CD8-positive, alpha-beta T cell (primary cell): ENCODE measurements at regions of chr1 and their contacts with region 1.

Region 1: DNA sequence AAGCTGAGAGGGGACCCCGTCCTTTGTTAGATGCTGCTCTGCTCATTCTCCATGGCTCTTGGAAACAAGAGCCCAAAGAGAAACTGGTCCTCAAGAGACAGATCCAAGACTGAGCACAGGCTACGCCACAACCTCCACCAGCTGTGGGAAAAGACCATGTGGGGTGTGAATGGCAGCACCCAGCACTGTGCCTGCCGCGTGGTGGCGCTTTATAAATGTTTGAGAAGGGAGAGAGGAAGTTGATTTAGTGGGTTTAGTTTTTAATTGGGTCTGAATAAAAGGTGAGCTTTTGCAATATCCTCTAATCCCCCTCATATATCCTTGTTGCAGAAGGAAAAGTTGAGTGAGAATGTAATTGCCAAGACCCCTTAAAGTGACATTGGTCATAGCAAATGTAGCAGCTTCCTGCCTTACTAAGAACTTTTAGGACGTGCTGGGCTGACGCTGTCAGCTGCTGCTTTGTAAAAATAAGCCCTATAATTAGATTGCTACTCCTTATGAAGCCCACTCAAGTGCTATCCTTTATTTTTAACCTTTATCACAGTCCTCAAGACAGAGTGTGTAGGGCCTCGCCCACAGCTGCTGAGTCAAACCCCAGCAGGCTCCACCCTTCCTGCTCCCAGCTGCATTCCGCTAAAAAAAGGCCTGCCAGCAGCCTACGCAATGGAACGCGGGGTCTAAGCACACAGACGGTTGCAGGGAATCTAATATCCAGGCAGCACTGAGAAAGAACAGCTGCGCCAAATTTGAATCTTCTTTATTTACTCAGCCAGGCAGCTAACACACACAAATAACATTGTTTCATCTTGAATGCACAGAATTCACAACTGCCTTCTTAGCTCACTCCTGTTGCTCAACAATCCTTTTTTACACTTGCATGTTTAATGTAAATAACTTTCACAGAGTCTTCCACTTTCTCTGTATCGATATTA is 47.4 kb upstream of the PRDX6 start:
- DNase-seq: peak; percentile 46 to 81 (median 69)
- ATAC-seq: peak; percentile 81
- H3K4me3 ChIP-seq: no peak overlapping the region
- H3K4me3 Mint-ChIP-seq: peak overlapping the region; percentile 53
- H3K27ac ChIP-seq: no peak overlapping the region
- H3K27ac Mint-ChIP-seq: peak overlapping the region; percentile 71
- H3K4me1 ChIP-seq: peaks cover 24% of the 10 kb centered on the region
- H3K4me1 Mint-ChIP-seq: peaks cover 26% of the 10 kb centered on the region
- H3K27me3 ChIP-seq: no peaks in the 10 kb centered on the region
- H3K27me3 Mint-ChIP-seq: no peaks in the 10 kb centered on the region
- CTCF ChIP-seq: peak; percentile 67

Region 2: DNA sequence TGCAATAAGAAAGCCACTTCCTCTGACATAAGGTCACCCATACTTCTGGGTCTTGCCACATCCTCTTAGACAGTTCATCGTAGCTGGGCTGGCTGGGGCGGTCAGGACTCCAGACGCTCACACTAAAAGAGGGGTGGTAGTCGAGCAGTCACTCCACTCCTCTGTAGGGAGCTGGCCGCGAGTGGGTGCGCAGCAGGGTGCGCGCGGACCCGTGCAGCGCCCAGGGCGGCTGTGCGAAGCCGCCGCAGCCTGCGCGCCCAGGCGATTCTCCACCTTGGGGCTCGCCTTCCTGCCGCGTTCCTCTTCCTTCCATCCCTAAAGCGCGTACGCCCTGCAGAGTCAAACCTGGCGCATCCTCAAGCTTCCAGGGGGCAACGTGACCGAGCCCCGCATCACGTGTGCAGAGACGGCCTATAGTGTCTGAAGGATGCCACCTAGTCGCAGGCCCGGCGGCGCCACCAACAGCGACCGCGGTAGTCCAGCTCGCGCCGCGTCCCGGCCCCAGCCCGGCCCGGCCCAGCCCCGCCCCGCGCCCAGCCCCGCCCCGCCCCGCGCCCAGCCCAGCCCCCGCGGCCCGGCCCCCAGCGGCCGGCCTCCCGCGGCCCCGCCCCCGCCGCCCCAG is 47.0 kb after region 1 on chr1:
- CTCF ChIA-PET with region 1: interaction called, 47 read pairs
- POLR2A ChIA-PET with region 1: interaction called, 19 read pairs
- intact Hi-C with region 1: loop called (anchors 1 kb)
- DNase-seq: peak; percentile 51 to 91 (median 73)
- ATAC-seq: peak; percentile 76
- H3K4me3 ChIP-seq: peak overlapping the region; percentile 71 to 83
- H3K4me3 Mint-ChIP-seq: peak overlapping the region; percentile 93
- H3K27ac ChIP-seq: peak overlapping the region; percentile 70 to 91
- H3K27ac Mint-ChIP-seq: peak overlapping the region; percentile 95
- H3K4me1 ChIP-seq: peaks cover 54% of the 10 kb centered on the region
- H3K4me1 Mint-ChIP-seq: peaks cover 75% of the 10 kb centered on the region
- H3K27me3 ChIP-seq: no peaks in the 10 kb centered on the region
- H3K27me3 Mint-ChIP-seq: no peaks in the 10 kb centered on the region
- CTCF ChIP-seq: no peak

Region 3: GRCh38 chr1:173714759-173715537 is 285.2 kb after region 1 on chr1 and contains the start of gene KLHL20:
- CTCF ChIA-PET with region 1: interaction called, 18 read pairs
- POLR2A ChIA-PET with region 1: interaction called, 5 read pairs
- intact Hi-C with region 1: loop called (anchors 1 kb)
- DNase-seq: peak; percentile 72 to 94 (median 83)
- ATAC-seq: peak; percentile 98
- H3K4me3 ChIP-seq: peak within 1 kb of the TSS; percentile 80 to 86
- H3K4me3 Mint-ChIP-seq: peak within 1 kb of the TSS; percentile 96
- H3K27ac ChIP-seq: peak within 1 kb of the TSS; percentile 76 to 87
- H3K27ac Mint-ChIP-seq: peak within 1 kb of the TSS; percentile 97
- H3K4me1 ChIP-seq: peaks cover 24% of the 10 kb centered on the region
- H3K4me1 Mint-ChIP-seq: peaks cover 38% of the 10 kb centered on the region
- H3K27me3 ChIP-seq: peaks cover 0 to 2% of the 10 kb centered on the region in 2 experiments
- H3K27me3 Mint-ChIP-seq: peaks cover 7% of the 10 kb centered on the region
- CTCF ChIP-seq: no peak
- total RNA-seq, gene KLHL20: 27.9 to 29.0 TPM

Region 4: DNA sequence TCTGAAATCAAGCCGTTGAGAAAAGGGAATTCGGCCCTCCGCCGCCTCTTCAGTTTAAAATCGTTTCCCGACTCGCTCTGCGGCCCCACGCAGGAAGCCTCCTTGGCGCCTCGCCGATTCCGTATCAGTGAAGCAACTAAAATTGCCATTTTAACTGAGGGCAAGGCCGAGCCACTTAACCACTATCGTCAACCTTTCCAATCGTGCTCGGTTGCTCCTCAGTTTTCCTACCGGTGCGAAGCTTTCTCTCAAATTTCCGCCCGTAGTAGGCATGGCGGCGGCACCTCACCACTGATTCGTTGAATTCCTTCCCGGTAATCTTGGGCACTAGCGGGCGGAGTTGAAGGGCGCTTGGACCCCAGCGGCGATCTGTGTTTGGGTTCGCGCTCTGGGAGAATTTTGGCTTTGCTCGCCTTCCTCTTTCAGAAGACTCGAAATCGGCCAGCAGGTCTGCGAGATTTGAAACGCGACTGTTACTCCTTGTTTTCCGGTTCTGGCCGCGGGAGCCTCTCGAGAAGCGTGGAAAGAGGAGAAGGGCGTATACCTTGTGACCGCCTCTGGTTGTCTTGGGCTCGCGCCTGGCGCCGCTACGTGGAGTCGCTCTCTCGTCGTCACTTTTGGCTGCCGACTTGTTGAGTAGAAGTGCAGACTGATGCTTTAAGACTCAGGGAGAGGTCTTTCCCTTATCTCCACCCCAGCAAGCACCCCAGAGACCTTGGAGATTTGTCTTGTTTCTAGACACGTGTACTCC is 394.8 kb after region 1 on chr1 and contains the starts of genes CENPL and DARS2:
- CTCF ChIA-PET with region 1: interaction called, 39 read pairs
- POLR2A ChIA-PET with region 1: interaction called, 8 read pairs
- intact Hi-C with region 1: loop called (anchors 1 kb)
- DNase-seq: peak; percentile 79 to 97 (median 90)
- ATAC-seq: peak; percentile 86
- H3K4me3 ChIP-seq: peak within 1 kb of the TSS; percentile 92 to 97
- H3K4me3 Mint-ChIP-seq: peak within 1 kb of the TSS; percentile 93
- H3K27ac ChIP-seq: peak within 1 kb of the TSS; percentile 78 to 87
- H3K27ac Mint-ChIP-seq: peak within 1 kb of the TSS; percentile 90
- H3K4me1 ChIP-seq: peaks cover 11% of the 10 kb centered on the region
- H3K4me1 Mint-ChIP-seq: peaks cover 54% of the 10 kb centered on the region
- H3K27me3 ChIP-seq: no peaks in the 10 kb centered on the region
- H3K27me3 Mint-ChIP-seq: no peaks in the 10 kb centered on the region
- CTCF ChIP-seq: no peak
- total RNA-seq, gene CENPL: 4.0 to 5.7 TPM
- total RNA-seq, gene DARS2: 1.5 to 1.6 TPM

Region 5: DNA sequence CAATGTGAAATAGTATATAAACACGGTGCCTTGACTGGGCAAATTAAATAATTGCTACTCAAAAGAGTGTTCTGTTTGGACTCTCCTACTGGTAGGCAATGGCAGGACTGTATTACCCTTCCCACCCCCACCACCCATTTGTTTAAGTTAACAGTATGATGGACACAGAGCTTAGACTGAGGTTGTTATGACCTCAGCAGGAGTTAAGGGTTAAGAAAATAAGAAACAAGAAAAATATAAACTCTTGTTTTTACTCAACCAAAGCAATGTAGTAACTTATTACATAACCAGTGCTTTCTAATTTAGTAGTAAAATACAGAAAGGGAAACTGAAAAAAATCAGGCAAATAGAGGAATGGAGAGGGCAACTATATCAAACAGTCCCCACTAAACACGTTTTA is 507.3 kb after region 1 on chr1:
- CTCF ChIA-PET with region 1: no interaction called
- POLR2A ChIA-PET with region 1: no interaction called
- intact Hi-C with region 1: loop called (anchors 10 kb)
- DNase-seq: no peak
- ATAC-seq: no peak
- H3K4me3 ChIP-seq: no peak overlapping the region
- H3K4me3 Mint-ChIP-seq: no peak overlapping the region
- H3K27ac ChIP-seq: no peak overlapping the region
- H3K27ac Mint-ChIP-seq: no peak overlapping the region
- H3K4me1 ChIP-seq: no peaks in the 10 kb centered on the region
- H3K4me1 Mint-ChIP-seq: no peaks in the 10 kb centered on the region
- H3K27me3 ChIP-seq: no peaks in the 10 kb centered on the region
- H3K27me3 Mint-ChIP-seq: no peaks in the 10 kb centered on the region
- CTCF ChIP-seq: no peak

Region 6: GRCh38 chr1:174217787-174218574 is 788.2 kb after region 1 on chr1:
- CTCF ChIA-PET with region 1: interaction called, 5 read pairs
- POLR2A ChIA-PET with region 1: no interaction called
- intact Hi-C with region 1: loop called in 1 of 2 experiments (anchors 2 kb)
- DNase-seq: peak in 2 of 9 experiments; percentile 58 to 70
- ATAC-seq: peak; percentile 75
- H3K4me3 ChIP-seq: no peak overlapping the region
- H3K4me3 Mint-ChIP-seq: no peak overlapping the region
- H3K27ac ChIP-seq: no peak overlapping the region
- H3K27ac Mint-ChIP-seq: no peak overlapping the region
- H3K4me1 ChIP-seq: no peaks in the 10 kb centered on the region
- H3K4me1 Mint-ChIP-seq: peaks cover 3% of the 10 kb centered on the region
- H3K27me3 ChIP-seq: no peaks in the 10 kb centered on the region
- H3K27me3 Mint-ChIP-seq: no peaks in the 10 kb centered on the region
- CTCF ChIP-seq: peak; percentile 92